Naive thymus-derived CD8-positive, alpha-beta T cell (primary cell): ENCODE measurements at regions of chr1 and their contacts with region 1.

Region 1: DNA sequence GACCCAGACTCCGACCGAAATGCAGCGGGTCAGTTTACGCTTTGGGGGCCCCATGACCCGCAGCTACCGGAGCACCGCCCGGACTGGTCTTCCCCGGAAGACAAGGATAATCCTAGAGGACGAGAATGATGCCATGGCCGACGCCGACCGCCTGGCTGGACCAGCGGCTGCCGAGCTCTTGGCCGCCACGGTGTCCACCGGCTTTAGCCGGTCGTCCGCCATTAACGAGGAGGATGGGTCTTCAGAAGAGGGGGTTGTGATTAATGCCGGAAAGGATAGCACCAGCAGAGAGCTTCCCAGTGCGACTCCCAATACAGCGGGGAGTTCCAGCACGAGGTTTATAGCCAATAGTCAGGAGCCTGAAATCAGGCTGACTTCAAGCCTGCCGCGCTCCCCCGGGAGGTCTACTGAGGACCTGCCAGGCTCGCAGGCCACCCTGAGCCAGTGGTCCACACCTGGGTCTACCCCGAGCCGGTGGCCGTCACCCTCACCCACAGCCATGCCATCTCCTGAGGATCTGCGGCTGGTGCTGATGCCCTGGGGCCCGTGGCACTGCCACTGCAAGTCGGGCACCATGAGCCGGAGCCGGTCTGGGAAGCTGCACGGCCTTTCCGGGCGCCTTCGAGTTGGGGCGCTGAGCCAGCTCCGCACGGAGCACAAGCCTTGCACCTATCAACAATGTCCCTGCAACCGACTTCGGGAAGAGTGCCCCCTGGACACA is 534 bp downstream of the C1orf56 start:
- DNase-seq: peak; percentile 37 to 80 (median 60)
- ATAC-seq: peak; percentile 73 to 83
- H3K4me3 Mint-ChIP-seq: peak overlapping the region; percentile 88 to 94 (median 93)
- H3K27ac Mint-ChIP-seq: peak overlapping the region; percentile 70 to 99 (median 93)
- H3K4me1 Mint-ChIP-seq: peaks cover 26 to 76% (median 73%) of the 10 kb centered on the region in 4 donors
- H3K27me3 Mint-ChIP-seq: no peaks in the 10 kb centered on the region

Region 2: GRCh38 chr1:151008190-151008860 is 39.8 kb before region 1 on chr1 and contains the start of gene PRUNE1:
- POLR2A ChIA-PET with region 1: interaction called, 11 read pairs
- DNase-seq: peak; percentile 88 to 98 (median 94)
- ATAC-seq: peak; percentile 77 to 83
- H3K4me3 Mint-ChIP-seq: peak within 1 kb of the TSS; percentile 89 to 98 (median 96)
- H3K27ac Mint-ChIP-seq: peak within 1 kb of the TSS; percentile 95 to 99 (median 98)
- H3K4me1 Mint-ChIP-seq: peaks cover 37 to 91% (median 84%) of the 10 kb centered on the region in 4 donors
- H3K27me3 Mint-ChIP-seq: no peaks in the 10 kb centered on the region
- polyA plus RNA-seq, gene PRUNE1: 53.2 to 55.1 (median 54.9) TPM

Region 3: DNA sequence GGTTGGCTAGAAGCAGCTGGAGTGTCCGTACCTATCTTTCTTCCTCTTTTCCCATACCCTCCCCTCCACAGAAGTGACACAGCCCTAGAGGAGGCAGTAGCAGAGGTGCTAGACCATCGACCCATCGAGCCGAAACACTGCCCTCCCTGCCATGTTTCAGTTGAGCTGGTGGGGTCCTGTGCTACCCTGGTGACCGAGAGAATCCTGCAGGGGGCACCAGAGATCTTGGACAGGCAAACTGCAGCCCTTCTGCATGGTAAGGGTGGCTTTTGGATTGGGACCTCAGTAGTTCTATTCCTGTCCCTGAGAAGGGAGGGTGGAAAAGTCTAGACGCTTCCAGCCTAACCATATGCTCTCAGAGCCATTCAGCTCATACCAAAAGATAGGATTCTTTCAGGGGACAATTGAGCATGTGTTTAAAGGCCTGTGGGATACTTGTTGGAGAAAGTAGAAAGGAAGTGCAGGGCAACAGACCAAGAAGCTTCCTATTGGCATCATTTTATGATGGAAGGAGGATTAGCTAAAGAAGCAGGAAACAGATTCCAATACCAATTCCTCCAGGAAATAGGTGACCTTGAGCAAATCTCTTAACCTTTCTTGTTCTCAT is 23.4 kb before region 1 on chr1:
- POLR2A ChIA-PET with region 1: interaction called, 17 read pairs
- DNase-seq: peak; percentile 77 to 94 (median 88)
- ATAC-seq: peak; percentile 100
- H3K4me3 Mint-ChIP-seq: peak overlapping the region in 9 of 10 donors; percentile 23 to 79 (median 56)
- H3K27ac Mint-ChIP-seq: peak overlapping the region; percentile 11 to 88 (median 71)
- H3K4me1 Mint-ChIP-seq: peaks cover 4 to 8% (median 7%) of the 10 kb centered on the region in 4 donors
- H3K27me3 Mint-ChIP-seq: no peaks in the 10 kb centered on the region

Region 4: DNA sequence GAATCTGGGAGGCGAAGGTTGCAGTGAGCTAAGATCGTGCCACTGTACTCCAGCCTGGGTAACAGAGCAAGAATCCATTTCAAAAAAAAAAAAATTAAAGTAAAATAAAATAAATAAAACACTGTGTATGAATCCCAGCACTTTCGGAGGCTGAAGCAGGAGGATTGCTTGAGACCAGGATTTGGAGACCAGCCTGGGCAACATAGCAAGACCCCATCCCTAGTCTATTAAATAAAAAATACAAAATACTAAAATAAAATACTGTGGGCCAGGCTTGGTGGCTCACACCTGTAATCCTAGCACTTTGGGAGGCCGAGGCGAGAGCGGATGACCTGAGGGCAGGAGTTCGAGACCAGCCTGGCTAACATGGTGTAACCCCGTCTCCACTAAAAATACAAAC is 15.9 kb before region 1 on chr1:
- POLR2A ChIA-PET with region 1: interaction called, 11 read pairs
- DNase-seq: no peak
- ATAC-seq: no peak
- H3K4me3 Mint-ChIP-seq: no peak overlapping the region
- H3K27ac Mint-ChIP-seq: no peak overlapping the region
- H3K4me1 Mint-ChIP-seq: peaks cover 3 to 23% (median 12%) of the 10 kb centered on the region in 4 donors
- H3K27me3 Mint-ChIP-seq: no peaks in the 10 kb centered on the region

Region 5: DNA sequence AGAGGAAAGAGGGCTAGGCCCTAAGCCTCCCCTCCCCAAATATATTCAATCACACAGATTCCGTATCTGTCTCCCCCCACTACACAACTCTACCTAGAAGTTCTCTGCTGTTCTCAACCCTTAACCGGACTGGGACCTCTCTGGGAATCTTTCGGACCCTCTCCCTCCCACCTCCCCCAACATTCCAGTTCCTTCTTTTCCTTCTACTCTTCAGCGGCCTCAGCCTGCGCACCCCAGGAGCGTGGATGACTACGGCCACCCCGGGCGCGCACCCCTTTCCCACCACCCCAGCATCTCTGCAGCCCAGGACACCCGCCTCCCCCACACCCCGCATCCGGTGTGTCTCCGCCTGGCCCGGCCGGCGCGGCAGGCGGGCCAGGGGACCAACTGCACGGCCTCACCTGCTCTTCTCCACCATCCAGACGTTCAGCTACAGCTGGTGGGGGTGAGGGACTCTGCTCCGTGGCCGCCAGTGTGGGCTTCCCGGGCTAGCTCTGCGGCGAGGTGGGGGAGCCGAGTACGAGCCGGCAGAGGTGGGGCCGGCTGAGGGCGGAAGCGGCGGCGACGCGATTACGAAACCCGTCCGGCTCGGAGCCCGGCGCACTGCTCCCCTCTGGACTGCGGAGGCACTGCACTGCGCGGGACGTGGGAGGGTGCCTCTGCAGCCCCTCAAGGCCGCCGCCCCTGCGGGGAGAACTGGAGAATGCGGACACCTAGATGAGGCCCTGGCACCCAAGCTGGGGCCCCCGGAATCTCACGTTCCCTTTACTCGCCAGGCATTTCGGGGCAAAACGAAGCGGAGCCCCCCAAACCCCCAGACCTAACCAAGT is 11.2 kb after region 1 on chr1 and contains the start of gene CDC42SE1:
- POLR2A ChIA-PET with region 1: interaction called, 264 read pairs
- DNase-seq: peak; percentile 75 to 90 (median 82)
- ATAC-seq: peak; percentile 77 to 84
- H3K4me3 Mint-ChIP-seq: peak within 1 kb of the TSS; percentile 93 to 100 (median 98)
- H3K27ac Mint-ChIP-seq: peak within 1 kb of the TSS; percentile 88 to 99 (median 96)
- H3K4me1 Mint-ChIP-seq: peaks cover 35 to 70% (median 52%) of the 10 kb centered on the region in 4 donors
- H3K27me3 Mint-ChIP-seq: no peaks in the 10 kb centered on the region
- polyA plus RNA-seq, gene CDC42SE1: 77.9 to 89.3 (median 80.9) TPM

Region 6: DNA sequence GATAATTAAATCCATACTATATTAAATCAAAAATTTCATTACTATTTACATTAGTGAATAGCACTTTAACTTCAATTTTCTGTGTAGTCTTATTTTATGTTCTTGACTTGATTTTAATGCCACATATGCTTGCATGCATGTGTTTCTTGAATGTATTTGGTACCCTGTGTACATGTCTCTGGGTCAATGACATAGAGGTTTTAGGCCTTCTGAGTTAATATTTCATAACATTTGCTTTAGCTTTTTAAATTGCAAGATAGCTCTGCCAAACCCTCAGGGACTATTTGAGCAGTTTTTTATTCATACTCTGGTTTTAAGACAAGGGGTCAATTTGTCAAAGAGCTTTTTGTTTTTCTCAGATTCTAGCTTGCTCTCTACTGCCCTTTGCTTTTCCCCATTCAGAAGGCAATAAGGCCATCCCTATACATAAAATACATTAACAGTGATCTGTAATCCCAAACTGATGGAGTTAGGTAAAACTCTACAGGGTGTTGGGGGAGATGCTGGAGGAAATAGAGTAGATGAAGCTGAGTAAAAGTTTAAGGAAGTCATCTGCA is 17.1 kb after region 1 on chr1:
- POLR2A ChIA-PET with region 1: interaction called, 264 read pairs
- DNase-seq: no peak
- ATAC-seq: no peak
- H3K4me3 Mint-ChIP-seq: no peak overlapping the region
- H3K27ac Mint-ChIP-seq: peak overlapping the region in 3 of 10 donors; percentile 11 to 36 (median 16)
- H3K4me1 Mint-ChIP-seq: peaks cover 15 to 45% (median 34%) of the 10 kb centered on the region in 4 donors
- H3K27me3 Mint-ChIP-seq: no peaks in the 10 kb centered on the region

Region 7: GRCh38 chr1:151070474-151071276 is 22.6 kb after region 1 on chr1 and contains the start of gene GABPB2:
- POLR2A ChIA-PET with region 1: interaction called, 26 read pairs
- DNase-seq: peak; percentile 80 to 95 (median 86)
- ATAC-seq: peak; percentile 82
- H3K4me3 Mint-ChIP-seq: peak within 1 kb of the TSS; percentile 95 to 100 (median 100)
- H3K27ac Mint-ChIP-seq: peak within 1 kb of the TSS; percentile 98 to 100 (median 100)
- H3K4me1 Mint-ChIP-seq: peaks cover 12 to 42% (median 31%) of the 10 kb centered on the region in 4 donors
- H3K27me3 Mint-ChIP-seq: no peaks in the 10 kb centered on the region
- polyA plus RNA-seq, gene GABPB2: 4.8 to 16.4 (median 5.4) TPM